OCI-LY7 (cell line): ENCODE measurements at regions of chr3 and their contacts with region 1.

Region 1: DNA sequence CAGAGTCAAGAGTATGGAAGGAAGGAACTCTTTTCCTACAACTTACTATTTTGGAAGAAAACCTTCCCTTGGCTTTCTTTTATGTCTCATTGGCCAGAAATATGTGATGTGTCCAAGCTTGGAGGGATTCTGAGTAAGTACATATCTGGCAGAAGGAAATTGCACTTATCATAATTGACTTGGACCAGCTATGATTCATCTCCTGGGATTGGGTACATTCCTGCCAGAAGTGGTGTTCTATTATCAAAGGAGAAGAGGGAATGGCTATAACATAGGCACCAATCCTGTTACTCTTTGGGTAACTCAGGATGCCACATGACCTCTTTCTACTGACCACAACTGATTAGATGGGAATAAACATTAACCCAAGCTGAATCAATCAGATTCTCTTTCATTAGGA is 13.5 kb upstream of the DAZL start:
- DNase-seq: no peak
- H3K4me3 ChIP-seq: no peak overlapping the region
- H3K27ac ChIP-seq: no peak overlapping the region
- H3K4me1 ChIP-seq: no peaks in the 10 kb centered on the region
- CTCF ChIP-seq: no peak

Region 2: DNA sequence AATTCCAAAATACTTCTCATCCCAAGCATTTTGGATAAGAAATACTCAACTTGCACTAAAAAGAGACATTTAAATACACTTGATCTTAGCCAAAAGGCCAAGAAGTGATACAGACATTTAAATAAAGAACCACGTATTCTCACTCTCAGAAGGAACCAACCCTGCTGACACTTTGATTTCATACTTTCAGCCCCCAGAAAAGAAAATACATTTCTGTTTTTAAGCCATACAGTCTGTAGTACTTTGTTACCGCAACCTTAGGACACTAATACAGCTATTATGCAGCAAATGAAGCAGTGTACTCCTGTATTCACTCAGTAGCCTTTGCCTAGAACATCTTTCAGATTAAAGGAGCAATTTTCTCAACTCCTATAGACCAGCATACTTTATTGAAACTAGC is 1037.0 kb after region 1 on chr3:
- CTCF ChIA-PET with region 1: no interaction called
- POLR2A ChIA-PET with region 1: interaction called, 11 read pairs
- intact Hi-C with region 1: no loop called
- DNase-seq: no peak
- H3K4me3 ChIP-seq: no peak overlapping the region
- H3K27ac ChIP-seq: no peak overlapping the region
- H3K4me1 ChIP-seq: no peaks in the 10 kb centered on the region
- CTCF ChIP-seq: no peak